ENCODE measurements at regions of chr2 and their contacts with region 1.

Region 1: DNA sequence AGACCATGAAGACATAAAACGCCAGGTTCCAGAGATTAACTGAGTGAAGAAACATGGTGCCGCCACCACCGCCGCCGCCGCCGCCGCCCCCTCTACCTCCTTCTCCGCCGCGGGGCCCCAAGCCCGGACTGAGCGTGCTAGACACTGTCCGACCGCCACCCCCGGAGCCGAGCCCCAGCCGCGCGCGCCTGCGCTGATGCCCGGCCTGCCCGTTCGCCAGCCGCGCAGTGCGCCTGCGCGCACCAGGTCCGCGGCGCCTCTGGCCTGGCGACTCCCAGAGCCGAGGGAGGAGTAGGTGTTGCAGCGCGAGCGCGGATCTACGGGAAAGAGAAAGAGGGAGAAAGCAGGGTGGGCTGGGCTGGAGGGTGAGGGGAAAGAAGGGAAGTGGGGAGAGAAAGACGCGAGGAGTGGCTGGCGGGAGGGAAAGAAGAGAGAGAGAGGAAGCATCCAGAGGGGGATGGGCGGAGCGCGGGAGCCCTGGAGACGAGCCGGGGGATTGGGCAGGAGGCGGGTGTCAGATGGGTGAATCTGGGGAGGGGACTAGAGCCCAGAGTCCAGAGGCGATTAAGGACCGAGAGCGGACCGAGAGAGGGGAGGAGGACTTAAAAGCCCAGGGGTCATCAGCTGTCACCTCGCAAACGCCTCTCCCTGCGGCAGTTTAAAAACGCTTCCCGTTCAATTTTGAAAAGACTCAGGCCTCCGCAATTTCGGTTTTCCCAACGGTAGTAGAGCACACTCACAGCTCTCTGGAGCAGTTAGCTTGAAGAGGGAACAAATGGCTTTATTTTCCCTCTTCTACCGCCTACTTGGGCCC is at the start of gene PGAP1:
- DNase-seq: peak; percentile 85
- H3K4me3 Mint-ChIP-seq: peak within 1 kb of the TSS; percentile 93
- H3K27ac Mint-ChIP-seq: peak within 1 kb of the TSS; percentile 98
- H3K4me1 Mint-ChIP-seq: peaks cover 31% of the 10 kb centered on the region
- H3K27me3 Mint-ChIP-seq: no peaks in the 10 kb centered on the region
- total RNA-seq, gene PGAP1: 29.3 to 33.3 TPM

Region 2: DNA sequence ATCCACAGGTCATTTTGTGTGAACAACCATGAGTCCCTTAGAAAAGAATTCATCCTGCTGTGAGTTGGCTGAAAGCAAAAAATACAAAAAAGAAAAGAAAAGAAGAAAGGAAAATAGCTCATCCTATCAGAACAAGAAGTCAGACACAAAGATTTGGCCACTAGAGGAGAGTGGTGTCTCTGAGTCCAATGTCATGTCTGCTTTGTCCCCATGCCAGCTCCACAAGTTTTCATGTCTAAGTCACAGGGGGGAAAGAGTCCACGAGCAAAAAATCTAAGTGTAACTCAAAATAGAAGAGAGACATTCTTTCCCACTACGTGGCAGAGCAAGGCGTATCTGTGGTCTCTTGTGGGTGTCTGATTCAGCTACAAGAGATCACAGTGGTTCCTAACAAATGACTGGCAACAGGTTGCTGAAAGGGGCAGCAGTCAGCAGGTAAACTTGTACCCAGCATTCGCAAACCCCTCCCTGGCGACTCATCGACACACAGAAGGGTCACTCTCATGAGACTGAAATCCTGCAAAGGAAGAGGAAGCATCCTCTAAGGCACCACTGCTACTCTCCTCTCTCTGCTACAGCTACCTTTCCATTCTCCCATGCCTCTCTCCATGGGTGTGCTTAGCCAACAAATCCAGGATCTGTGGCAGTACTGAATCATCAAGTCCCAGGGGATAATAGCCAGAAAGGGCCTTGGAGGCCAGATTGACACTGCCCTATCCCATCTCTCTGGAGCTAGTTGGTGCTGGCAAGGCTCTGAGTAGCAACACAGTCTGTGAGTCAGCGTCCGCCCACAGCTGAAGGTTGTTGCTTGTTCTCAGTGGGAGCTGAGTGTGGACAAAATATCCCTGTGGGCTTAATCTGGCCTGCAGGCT is 1392.8 kb before region 1 on chr2:
- CTCF ChIA-PET with region 1: no interaction called
- intact Hi-C with region 1: loop called (anchors 10 kb)
- DNase-seq: peak; percentile 85
- H3K4me3 Mint-ChIP-seq: peak overlapping the region; percentile 75
- H3K27ac Mint-ChIP-seq: peak overlapping the region; percentile 98
- H3K4me1 Mint-ChIP-seq: peaks cover 79% of the 10 kb centered on the region
- H3K27me3 Mint-ChIP-seq: no peaks in the 10 kb centered on the region

Region 3: GRCh38 chr2:196376984-196377877 is 549.5 kb before region 1 on chr2:
- CTCF ChIA-PET with region 1: no interaction called
- intact Hi-C with region 1: loop called (anchors 2 kb)
- DNase-seq: peak; percentile 62
- H3K4me3 Mint-ChIP-seq: no peak overlapping the region
- H3K27ac Mint-ChIP-seq: peak overlapping the region; percentile 50
- H3K4me1 Mint-ChIP-seq: peaks cover 12% of the 10 kb centered on the region
- H3K27me3 Mint-ChIP-seq: no peaks in the 10 kb centered on the region

Region 4: GRCh38 chr2:196875414-196875813 is 51.4 kb before region 1 on chr2:
- CTCF ChIA-PET with region 1: no interaction called
- intact Hi-C with region 1: loop called (anchors 2 kb)
- DNase-seq: no peak
- H3K4me3 Mint-ChIP-seq: no peak overlapping the region
- H3K27ac Mint-ChIP-seq: no peak overlapping the region
- H3K4me1 Mint-ChIP-seq: no peaks in the 10 kb centered on the region
- H3K27me3 Mint-ChIP-seq: no peaks in the 10 kb centered on the region

Region 5: GRCh38 chr2:197042739-197043196 is 116.0 kb after region 1 on chr2:
- CTCF ChIA-PET with region 1: no interaction called
- intact Hi-C with region 1: loop called (anchors 1 kb)
- DNase-seq: peak; percentile 45
- H3K4me3 Mint-ChIP-seq: no peak overlapping the region
- H3K27ac Mint-ChIP-seq: peak overlapping the region; percentile 85
- H3K4me1 Mint-ChIP-seq: peaks cover 35% of the 10 kb centered on the region
- H3K27me3 Mint-ChIP-seq: no peaks in the 10 kb centered on the region

Region 6: DNA sequence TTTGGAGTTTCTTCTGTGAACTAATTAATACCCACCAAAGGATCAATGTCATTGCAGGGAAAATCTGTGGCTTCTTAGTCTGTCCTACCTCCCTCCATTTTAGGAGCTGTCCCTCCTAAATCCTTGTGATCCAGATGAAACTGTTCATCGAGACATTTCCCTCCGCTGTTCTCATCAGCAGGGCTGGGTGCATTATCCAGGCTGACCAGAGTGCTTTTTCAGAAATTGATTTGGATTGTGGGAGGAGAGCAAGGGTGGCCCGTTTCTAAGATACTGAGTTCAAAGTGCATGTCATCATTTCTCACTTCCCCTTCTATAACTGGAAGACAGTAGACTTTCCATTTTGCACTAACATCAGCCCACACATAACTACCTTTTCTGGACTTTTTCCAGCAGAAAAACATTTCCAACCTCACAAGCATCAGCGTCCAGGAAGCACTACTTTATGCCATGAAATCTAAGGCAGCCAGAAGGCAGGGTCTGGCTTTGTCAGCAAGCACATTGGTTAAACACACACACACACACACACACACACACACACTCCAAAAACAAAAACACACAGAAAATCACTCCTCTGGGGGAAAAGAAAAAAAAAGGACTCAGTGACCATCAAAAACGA is 289.7 kb after region 1 on chr2:
- CTCF ChIA-PET with region 1: no interaction called
- intact Hi-C with region 1: loop called (anchors 5 kb)
- DNase-seq: no peak
- H3K4me3 Mint-ChIP-seq: peak overlapping the region; percentile 69
- H3K27ac Mint-ChIP-seq: peak overlapping the region; percentile 97
- H3K4me1 Mint-ChIP-seq: peaks cover 94% of the 10 kb centered on the region
- H3K27me3 Mint-ChIP-seq: no peaks in the 10 kb centered on the region

Region 7: GRCh38 chr2:197434541-197435513 is 508.1 kb after region 1 on chr2 and contains the start of gene SF3B1:
- CTCF ChIA-PET with region 1: interaction called, 3 read pairs
- intact Hi-C with region 1: loop called (anchors 2 kb)
- DNase-seq: peak; percentile 100
- H3K4me3 Mint-ChIP-seq: peak within 1 kb of the TSS; percentile 99
- H3K27ac Mint-ChIP-seq: peak within 1 kb of the TSS; percentile 100
- H3K4me1 Mint-ChIP-seq: peaks cover 46% of the 10 kb centered on the region
- H3K27me3 Mint-ChIP-seq: no peaks in the 10 kb centered on the region
- total RNA-seq, gene SF3B1: 235 to 248 TPM

Measured in activated naive CD4-positive, alpha-beta T cell treated with anti-CD3 and anti-CD28 coated beads for 36 hours (primary cell).